Panc1 (cell line): ENCODE measurements at regions of chr22 and their contacts with region 1.

Region 1: DNA sequence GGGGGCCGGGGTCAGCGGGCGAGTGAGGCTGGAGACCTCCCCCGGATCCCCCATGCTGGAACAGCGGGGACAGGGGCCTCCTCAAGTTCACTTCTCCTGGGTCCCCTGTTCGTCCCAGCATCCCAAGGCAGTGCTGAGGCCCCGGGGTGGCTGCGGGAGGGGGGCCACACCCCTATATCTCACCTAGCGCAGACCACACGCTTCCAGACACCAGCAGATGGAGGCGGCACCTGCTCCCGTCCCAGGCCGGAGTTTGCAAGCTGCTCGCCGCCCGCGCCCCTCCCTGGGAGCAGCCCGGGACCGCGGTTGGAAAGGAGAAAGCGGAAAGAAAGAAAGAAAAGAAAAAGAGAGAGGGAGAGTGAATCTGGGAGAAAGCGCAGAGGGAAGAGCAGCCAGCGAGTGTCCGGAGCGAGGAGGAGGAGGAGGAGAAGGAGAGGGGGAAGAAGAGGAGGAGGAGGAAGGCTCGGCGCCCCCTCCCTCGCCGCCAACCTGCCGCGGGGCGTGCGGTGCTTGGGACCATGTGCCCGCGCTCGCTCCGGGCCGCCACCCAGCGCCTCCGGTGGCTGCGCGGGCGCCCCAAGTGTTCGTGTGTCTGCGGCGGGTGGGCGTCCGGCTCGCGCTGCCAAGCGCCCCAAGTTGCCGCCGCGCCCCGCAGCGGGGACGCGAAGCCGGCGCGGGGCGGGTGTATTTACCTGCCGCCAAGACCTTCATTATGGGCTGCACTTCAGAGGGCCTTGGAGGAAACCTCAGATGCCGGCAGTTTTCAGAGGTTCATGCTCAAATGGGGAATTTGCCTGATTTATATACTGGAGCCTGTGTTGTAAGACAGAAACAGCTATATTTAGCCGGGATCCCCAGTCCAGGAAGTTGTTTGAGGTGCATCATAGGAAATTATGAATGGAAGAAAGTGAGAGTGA is at the start of gene LIF:
- DNase-seq: no peak
- ATAC-seq: peak; percentile 10
- H3K4me3 ChIP-seq: peak within 1 kb of the TSS; percentile 37 to 50
- H3K27ac ChIP-seq: peak within 1 kb of the TSS; percentile 95
- H3K4me1 ChIP-seq: peaks cover 72% of the 10 kb centered on the region
- H3K27me3 ChIP-seq: no peaks in the 10 kb centered on the region
- CTCF ChIP-seq: no peak
- total RNA-seq, gene LIF: 34.4 TPM

Region 2: GRCh38 chr22:30104501-30105156 is 141.6 kb before region 1 on chr22:
- CTCF ChIA-PET with region 1: interaction called, 3 read pairs
- POLR2A ChIA-PET with region 1: no interaction called
- in situ Hi-C with region 1: no loop called
- intact Hi-C with region 1: loop called (anchors 5 kb)
- DNase-seq: no peak
- ATAC-seq: no peak
- H3K4me3 ChIP-seq: no peak overlapping the region
- H3K27ac ChIP-seq: no peak overlapping the region
- H3K4me1 ChIP-seq: 0 out of 2 replicates have a peak, but pooled peaks cover 5% of the 10 kb centered on the region
- H3K27me3 ChIP-seq: no peaks in the 10 kb centered on the region
- CTCF ChIP-seq: no peak

Region 3: GRCh38 chr22:30212363-30212995 is 33.8 kb before region 1 on chr22:
- CTCF ChIA-PET with region 1: interaction called, 3 read pairs
- POLR2A ChIA-PET with region 1: interaction called, 3 read pairs
- in situ Hi-C with region 1: no loop called
- intact Hi-C with region 1: loop called (anchors 5 kb)
- DNase-seq: peak; percentile 93
- ATAC-seq: peak; percentile 86
- H3K4me3 ChIP-seq: no peak overlapping the region
- H3K27ac ChIP-seq: peak overlapping the region; percentile 98
- H3K4me1 ChIP-seq: peaks cover 63% of the 10 kb centered on the region
- H3K27me3 ChIP-seq: no peaks in the 10 kb centered on the region
- CTCF ChIP-seq: no peak

Region 4: GRCh38 chr22:30634471-30635233 is 388.4 kb after region 1 on chr22:
- CTCF ChIA-PET with region 1: interaction called, 11 read pairs
- POLR2A ChIA-PET with region 1: no interaction called
- in situ Hi-C with region 1: no loop called
- intact Hi-C with region 1: no loop called
- DNase-seq: peak; percentile 73
- ATAC-seq: peak; percentile 74
- H3K4me3 ChIP-seq: peak overlapping the region; percentile 57 to 60
- H3K27ac ChIP-seq: 0 out of 2 replicates have a peak overlapping the region, but pooled peaks have one; percentile 39
- H3K4me1 ChIP-seq: peaks cover 10% of the 10 kb centered on the region; the same call in 1 of the 2 replicates
- H3K27me3 ChIP-seq: no peaks in the 10 kb centered on the region
- CTCF ChIP-seq: peak; percentile 91